WTC11 (cell line): ENCODE measurements at regions of chr16 and their contacts with region 1.

Region 1: DNA sequence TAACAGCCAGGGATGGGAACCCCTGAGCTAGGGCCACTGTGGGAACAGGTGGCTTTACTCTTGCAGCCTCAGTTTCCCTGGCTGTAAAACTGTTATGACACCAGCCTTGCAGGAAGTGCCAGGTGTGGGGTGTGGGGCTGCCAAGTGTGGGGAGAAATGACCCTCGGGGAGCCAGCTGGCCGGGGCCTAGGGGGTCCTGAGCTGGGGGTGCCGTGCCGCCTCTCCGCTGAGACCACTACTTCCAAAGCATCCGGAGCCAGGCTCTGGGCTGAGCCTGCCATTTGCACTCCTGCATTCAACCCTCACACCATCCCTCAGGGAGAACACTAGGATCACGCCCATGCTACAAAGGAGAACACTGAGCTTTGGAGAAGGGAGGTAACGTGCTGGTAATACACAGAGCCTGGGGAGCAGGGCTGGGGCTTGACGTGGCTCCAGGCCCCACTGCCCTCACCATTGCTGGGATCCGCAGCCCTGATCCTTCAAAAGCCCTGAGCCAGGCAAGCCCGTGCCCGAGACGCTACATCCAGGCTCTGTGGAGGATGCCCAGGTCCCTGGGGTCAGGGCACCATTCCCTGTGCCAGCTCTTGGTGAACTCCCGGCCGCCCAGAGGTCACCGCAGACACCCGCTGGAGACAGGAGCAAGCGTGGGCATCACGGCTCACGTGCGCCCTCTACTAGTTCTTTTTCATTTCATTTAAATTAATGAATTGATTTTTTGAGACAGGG is 28.8 kb upstream of the GINS2 start:
- DNase-seq: peak; percentile 73
- ATAC-seq: peak; percentile 57
- H3K4me3 Mint-ChIP-seq: no peak overlapping the region
- H3K27ac Mint-ChIP-seq: no peak overlapping the region
- H3K4me1 Mint-ChIP-seq: peaks cover 13% of the 10 kb centered on the region
- H3K27me3 Mint-ChIP-seq: peaks cover 19% of the 10 kb centered on the region
- CTCF ChIP-seq: peak; percentile 62

Region 2: DNA sequence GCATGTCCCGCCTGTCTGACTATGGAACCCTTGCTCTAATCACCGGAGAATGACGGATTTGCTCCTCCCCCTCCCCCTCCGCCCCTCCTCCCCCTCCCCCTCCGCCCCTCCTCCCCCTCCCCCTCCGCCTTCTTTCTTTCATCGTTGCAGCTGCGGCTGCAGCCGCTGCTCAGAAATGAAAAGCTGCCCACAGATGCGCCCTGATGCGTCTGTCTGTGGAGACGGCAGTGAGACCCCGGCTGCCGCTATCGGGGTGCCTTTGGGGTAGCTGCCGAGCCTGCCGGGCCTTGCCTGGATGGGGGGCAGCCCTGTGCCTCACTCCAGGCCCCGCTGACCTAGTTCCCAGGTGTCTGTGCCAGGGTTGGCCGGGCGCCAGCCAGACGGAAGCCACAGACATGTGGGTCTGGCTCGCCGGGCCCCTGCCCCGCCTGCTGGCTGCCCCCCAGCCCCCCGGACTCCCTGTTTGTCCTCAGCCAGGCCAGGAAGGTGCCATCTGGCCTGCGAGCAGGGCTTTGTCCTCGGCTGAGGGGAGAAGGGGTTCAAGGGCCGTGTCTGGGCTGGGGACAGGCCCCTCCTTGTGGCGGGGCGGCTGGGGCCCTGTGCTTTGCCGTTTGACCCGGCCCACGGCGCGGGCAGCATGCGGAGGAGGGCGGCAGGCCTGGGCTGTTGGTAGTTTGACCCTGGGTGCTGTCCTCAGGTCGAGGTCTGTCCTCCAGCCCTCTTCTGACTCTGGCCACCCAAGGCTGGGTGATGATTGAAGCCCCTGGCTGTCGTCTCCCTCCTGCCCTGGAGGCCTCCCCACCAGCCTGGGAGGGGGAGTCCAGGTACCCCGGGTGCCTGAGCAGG is 66.4 kb before region 1 on chr16:
- CTCF ChIA-PET with region 1: interaction called, 16 read pairs
- POLR2A ChIA-PET with region 1: no interaction called
- DNase-seq: no peak
- ATAC-seq: no peak
- H3K4me3 Mint-ChIP-seq: no peak overlapping the region
- H3K27ac Mint-ChIP-seq: no peak overlapping the region
- H3K4me1 Mint-ChIP-seq: peaks cover 5% of the 10 kb centered on the region; the same call in 1 of the 2 replicates
- H3K27me3 Mint-ChIP-seq: no peaks in the 10 kb centered on the region
- CTCF ChIP-seq: no peak

Region 3: GRCh38 chr16:85675251-85675927 is 42.2 kb before region 1 on chr16:
- CTCF ChIA-PET with region 1: interaction called, 75 read pairs
- POLR2A ChIA-PET with region 1: no interaction called
- DNase-seq: no peak
- ATAC-seq: peak; percentile 53
- H3K4me3 Mint-ChIP-seq: no peak overlapping the region
- H3K27ac Mint-ChIP-seq: no peak overlapping the region
- H3K4me1 Mint-ChIP-seq: no peaks in the 10 kb centered on the region
- H3K27me3 Mint-ChIP-seq: no peaks in the 10 kb centered on the region
- CTCF ChIP-seq: no peak

Region 4: GRCh38 chr16:85683363-85683762 is 34.2 kb before region 1 on chr16:
- CTCF ChIA-PET with region 1: interaction called, 75 read pairs
- POLR2A ChIA-PET with region 1: interaction called, 4 read pairs
- DNase-seq: no peak
- ATAC-seq: no peak
- H3K4me3 Mint-ChIP-seq: no peak overlapping the region
- H3K27ac Mint-ChIP-seq: peak overlapping the region; percentile 43; the same call in 1 of the 2 replicates
- H3K4me1 Mint-ChIP-seq: peaks cover 12% of the 10 kb centered on the region
- H3K27me3 Mint-ChIP-seq: no peaks in the 10 kb centered on the region
- CTCF ChIP-seq: no peak

Region 5: GRCh38 chr16:85688586-85689284 is 28.8 kb before region 1 on chr16 and contains the start of gene GINS2:
- CTCF ChIA-PET with region 1: interaction called, 33 read pairs
- POLR2A ChIA-PET with region 1: interaction called, 4 read pairs
- DNase-seq: peak; percentile 93
- ATAC-seq: peak; percentile 99
- H3K4me3 Mint-ChIP-seq: peak within 1 kb of the TSS; percentile 74
- H3K27ac Mint-ChIP-seq: no peak within 1 kb of the TSS
- H3K4me1 Mint-ChIP-seq: peaks cover 10% of the 10 kb centered on the region
- H3K27me3 Mint-ChIP-seq: peaks cover 17% of the 10 kb centered on the region; the same call in 1 of the 2 replicates
- CTCF ChIP-seq: no peak
- total RNA-seq, gene GINS2: 35.5 to 38.4 TPM (median 38.0 TPM) in 3 replicates

Region 6: DNA sequence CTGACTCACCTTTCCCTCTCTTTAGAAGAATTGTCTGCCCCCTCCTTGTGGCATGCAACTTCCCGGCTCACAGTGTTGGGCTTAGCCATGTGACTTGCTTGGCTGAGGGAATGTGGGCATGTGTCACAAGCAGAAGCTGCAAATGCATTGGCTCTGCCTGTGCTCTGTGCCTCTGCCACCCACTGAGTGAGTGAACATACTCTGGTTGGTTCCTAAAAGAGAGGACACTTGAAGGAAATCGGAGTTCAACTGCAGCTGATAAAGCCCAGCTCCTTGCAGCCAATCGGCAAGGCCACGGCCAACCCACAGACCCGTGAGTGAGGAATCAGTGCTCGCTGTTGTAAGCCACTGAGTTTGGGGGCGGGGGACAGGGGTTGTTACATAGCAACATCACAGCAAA is 17.9 kb before region 1 on chr16:
- CTCF ChIA-PET with region 1: interaction called, 13 read pairs
- POLR2A ChIA-PET with region 1: no interaction called
- DNase-seq: no peak
- ATAC-seq: 0 out of 2 replicates have a peak, but pooled peaks have one; percentile 7
- H3K4me3 Mint-ChIP-seq: no peak overlapping the region
- H3K27ac Mint-ChIP-seq: no peak overlapping the region
- H3K4me1 Mint-ChIP-seq: 0 out of 2 replicates have a peak, but pooled peaks cover 6% of the 10 kb centered on the region
- H3K27me3 Mint-ChIP-seq: peaks cover 4% of the 10 kb centered on the region
- CTCF ChIP-seq: no peak

Region 7: GRCh38 chr16:85853547-85854545 is 136.3 kb after region 1 on chr16:
- CTCF ChIA-PET with region 1: no interaction called
- POLR2A ChIA-PET with region 1: no interaction called
- DNase-seq: no peak
- ATAC-seq: no peak
- H3K4me3 Mint-ChIP-seq: no peak overlapping the region
- H3K27ac Mint-ChIP-seq: no peak overlapping the region
- H3K4me1 Mint-ChIP-seq: peaks cover 9% of the 10 kb centered on the region
- H3K27me3 Mint-ChIP-seq: peaks cover 3% of the 10 kb centered on the region
- CTCF ChIP-seq: no peak